ENCODE measurements at regions of chr9 and their contacts with region 1.

Region 1: DNA sequence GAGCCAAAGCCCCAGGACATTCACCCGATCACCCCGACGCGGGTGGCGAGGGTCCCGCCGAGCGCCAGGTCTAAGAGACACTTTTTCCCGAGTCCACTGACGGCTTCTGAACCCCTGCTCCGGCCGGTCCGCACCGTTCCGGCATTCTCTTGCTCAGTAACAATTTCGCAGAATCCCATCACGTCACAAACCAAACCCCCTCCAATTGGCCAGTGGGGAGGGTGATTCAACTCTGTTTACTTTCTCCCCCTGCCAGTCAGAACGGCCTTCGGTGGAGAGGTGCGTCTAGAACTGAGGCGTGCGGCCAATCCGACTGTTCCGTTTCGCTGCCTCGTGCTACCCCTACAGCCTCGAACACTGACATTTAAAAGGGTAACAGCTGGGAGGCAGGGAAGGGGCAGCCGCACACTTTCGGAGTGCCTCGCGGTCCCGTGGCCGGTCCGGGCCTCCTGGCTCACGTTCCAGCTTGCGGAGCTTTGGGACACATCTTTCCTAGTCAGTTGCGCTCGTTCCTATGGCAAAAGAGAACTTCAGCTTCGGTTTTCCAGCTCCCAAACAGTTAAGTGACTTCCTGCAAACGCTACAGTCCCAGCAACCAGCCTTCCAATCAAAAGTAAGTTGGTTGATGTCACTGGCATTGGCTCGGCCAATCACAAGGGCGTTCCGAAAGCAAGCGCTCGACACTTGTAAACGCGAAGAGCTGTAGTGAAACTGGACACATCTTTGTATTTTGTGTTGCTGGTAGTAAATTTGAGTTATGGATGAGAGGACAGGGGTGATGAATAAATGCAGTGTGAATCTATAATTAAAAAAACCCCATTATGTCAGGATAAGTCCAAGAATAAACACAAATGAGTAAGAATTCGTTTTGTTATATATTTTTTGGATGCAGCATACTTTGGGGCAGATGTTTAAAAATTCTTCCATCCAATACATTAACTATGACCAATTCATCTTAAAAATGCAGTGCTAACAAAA is at the start of gene KLF9:
- DNase-seq: peak; percentile 71

Region 2: DNA sequence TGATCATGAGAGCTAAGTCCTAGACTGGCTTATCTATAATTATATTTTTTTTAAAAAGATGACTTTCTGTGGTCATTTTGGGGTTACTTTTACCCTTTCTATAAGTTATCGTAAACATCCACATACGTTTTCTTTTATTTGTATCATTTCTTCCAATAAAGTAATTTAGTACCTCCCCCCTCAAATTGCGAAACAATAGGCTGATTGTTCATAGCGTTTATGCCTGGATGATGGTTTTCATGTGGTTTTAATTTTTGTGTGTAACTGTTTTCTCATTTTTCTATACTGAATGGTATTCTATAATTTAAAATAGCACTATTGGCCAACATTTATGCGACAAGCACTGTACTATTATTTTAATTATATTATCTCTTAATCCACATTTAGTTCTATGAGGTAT is 110.8 kb before region 1 on chr9:
- CTCF ChIA-PET with region 1: interaction called, 10 read pairs
- POLR2A ChIA-PET with region 1: no interaction called
- DNase-seq: no peak

Region 3: DNA sequence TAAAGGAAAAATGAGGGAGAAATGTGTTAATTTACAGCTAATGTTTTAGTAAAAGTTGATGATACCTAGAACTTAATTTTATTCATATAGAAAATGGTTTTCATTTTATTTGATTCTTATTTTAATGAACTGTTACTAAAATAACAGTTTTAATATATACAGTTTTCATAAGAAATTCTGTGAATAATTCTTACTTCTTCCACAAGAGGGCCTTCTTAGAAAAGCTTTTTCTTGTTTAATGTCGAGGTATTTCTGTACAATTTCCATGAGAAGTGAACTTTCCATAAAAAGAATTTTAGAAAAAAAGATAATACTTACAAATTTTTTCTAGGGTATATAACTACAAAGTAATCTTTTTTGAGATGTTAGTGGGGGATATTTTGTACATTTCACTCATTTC is 73.5 kb before region 1 on chr9:
- CTCF ChIA-PET with region 1: no interaction called
- POLR2A ChIA-PET with region 1: no interaction called
- DNase-seq: no peak

Region 4: GRCh38 chr9:70392189-70392588 is 21.9 kb before region 1 on chr9:
- CTCF ChIA-PET with region 1: no interaction called
- POLR2A ChIA-PET with region 1: interaction called, 12 read pairs
- DNase-seq: no peak

Region 5: DNA sequence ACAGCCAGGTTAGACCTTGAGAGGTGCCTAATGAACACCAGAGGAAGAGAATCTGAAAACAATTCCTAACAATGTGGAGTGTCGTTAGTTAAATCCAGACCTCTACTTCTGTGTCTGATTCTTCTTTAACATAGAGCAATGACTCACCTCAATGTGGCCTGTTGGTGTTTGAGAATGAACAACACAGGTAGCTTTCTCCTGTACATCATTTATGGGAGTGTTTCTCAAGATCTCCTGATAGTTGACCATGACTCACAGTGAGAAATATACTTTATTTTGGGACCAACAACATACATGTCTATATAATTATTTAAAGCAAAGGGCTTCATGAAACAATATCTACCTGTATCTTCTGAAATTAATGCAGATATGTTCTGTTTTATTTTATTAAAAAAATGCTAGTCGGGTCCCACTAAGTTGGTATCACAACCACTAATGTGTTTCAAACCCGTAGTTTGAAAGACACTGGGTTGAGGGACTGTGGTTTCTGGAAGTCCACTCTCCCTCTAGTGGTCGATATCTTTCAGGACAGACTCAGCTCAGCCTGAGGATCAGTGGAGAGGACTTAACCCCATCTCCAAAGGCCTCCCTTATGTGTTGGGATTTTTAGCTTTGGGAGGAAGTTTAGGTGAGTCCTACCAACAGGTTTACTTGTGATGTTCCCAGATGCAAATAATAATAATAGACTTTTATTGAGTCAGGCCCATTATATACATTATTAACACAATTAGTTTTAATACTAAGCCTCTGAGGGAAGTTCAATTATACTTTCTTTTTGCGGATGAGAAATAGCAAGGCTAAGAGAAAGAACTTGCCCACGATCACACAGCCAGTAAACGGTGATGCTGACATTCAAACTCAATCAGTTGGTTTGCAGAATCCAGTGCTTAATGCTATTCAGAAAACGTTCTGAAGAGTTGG is 70.4 kb after region 1 on chr9:
- CTCF ChIA-PET with region 1: interaction called, 4 read pairs
- POLR2A ChIA-PET with region 1: interaction called, 21 read pairs
- DNase-seq: peak; percentile 76

Region 6: DNA sequence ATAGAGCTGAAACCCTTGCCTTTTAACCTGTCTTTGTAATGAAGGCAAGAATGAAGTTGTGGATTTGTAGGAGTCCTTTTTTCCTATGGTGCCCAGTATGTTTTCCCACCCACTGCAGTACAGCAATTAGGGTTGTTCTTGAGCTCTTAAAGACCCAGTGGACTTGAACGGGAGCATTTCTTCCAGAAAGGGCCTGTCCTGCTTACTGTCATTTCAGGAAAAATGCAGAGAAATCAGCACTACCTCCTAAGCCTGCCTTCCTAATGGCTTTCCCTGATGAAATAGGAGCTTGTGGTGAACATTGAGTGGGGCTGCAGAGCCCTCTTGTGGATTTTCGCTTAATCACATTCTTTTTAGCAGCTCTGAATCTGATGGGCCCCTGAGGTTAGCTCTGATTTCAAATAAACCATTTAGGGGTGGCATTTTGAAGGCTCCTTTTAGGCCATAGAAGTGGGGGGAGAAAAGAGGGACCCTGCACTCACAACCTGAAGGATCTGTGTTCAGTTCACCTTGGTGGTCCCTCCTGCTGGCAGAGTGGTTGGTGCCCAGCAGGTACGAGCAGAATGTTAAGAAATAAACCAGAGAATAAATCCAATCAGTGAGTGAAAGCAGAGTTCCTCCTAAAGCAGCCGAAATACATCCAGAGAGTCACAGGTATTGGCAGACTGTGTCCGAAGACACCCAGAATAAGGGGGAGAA is 188.4 kb after region 1 on chr9:
- CTCF ChIA-PET with region 1: no interaction called
- POLR2A ChIA-PET with region 1: interaction called, 14 read pairs
- DNase-seq: peak; percentile 73

Measured in HEK293T (cell line).